Activated B cell treated with CpG ODN at 0.5 μM for 24 hours (primary cell): ENCODE measurements at regions of chr4 and their contacts with region 1.

Region 1: DNA sequence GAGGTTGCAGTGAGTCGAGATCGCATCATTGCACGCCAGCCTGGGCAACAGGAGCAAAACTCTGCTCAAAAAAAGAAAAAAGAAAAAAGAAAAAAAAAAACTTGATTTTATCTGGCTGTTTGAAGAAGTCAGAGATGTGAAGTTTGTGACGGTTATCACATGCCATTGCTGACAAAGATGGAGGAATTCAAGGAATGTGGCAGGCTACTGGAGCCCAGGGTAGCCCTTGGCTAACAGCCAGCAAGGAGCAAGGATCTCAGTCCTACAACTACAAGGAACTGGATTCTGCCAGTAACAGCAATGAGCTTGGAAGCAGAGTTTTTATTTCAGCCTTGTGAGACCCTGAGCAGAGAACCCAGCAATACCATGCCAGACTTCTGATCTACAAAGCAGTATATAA is 24.3 kb upstream of the TET2 start:
- DNase-seq: no peak
- ATAC-seq: no peak
- H3K4me3 Mint-ChIP-seq: no peak overlapping the region
- H3K27ac Mint-ChIP-seq: no peak overlapping the region
- H3K4me1 Mint-ChIP-seq: no peaks in the 10 kb centered on the region
- H3K27me3 Mint-ChIP-seq: no peaks in the 10 kb centered on the region
- CTCF ChIP-seq: no peak

Region 2: DNA sequence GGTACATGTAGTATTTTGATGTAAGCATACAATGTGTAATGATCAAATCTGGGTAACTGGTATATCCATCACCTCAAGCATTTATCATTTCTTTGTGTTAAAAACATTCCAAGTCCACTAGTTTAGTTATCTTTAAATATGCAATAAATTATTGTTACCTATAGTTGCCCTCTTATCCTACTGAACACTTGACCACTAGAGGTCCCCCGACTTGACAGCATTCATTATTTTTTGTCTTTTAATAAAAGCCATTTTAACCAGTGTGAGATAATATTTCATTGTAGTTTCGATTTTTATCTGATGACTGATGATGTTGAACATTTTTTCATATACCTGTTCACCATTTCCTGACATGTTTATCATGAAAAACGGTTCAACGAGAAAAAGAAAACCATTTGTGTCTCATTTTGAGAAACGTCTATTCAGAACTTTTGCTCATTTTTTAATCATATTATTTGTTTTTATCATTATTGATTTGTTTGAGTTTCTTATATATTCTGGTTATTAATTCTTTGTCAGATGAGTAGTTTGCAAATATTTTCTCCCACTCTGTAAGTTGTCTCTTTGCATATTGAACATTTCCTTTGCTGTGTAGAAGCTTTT is 428.6 kb before region 1 on chr4:
- CTCF ChIA-PET with region 1: no interaction called
- POLR2A ChIA-PET with region 1: no interaction called
- intact Hi-C with region 1: loop called (anchors 5 kb)
- DNase-seq: no peak
- ATAC-seq: no peak
- H3K4me3 Mint-ChIP-seq: no peak overlapping the region
- H3K27ac Mint-ChIP-seq: no peak overlapping the region
- H3K4me1 Mint-ChIP-seq: no peaks in the 10 kb centered on the region
- H3K27me3 Mint-ChIP-seq: no peaks in the 10 kb centered on the region
- CTCF ChIP-seq: no peak

Region 3: GRCh38 chr4:105050896-105051295 is 71.5 kb before region 1 on chr4:
- CTCF ChIA-PET with region 1: no interaction called
- POLR2A ChIA-PET with region 1: no interaction called
- intact Hi-C with region 1: no loop called
- DNase-seq: no peak
- ATAC-seq: no peak
- H3K4me3 Mint-ChIP-seq: no peak overlapping the region
- H3K27ac Mint-ChIP-seq: no peak overlapping the region
- H3K4me1 Mint-ChIP-seq: no peaks in the 10 kb centered on the region
- H3K27me3 Mint-ChIP-seq: peaks cover 3% of the 10 kb centered on the region
- CTCF ChIP-seq: no peak

Region 4: GRCh38 chr4:105146276-105147015 is 24.1 kb after region 1 on chr4 and contains the start of gene TET2:
- CTCF ChIA-PET with region 1: no interaction called
- POLR2A ChIA-PET with region 1: no interaction called
- intact Hi-C with region 1: no loop called
- DNase-seq: peak; percentile 72
- ATAC-seq: peak; percentile 80
- H3K4me3 Mint-ChIP-seq: peak within 1 kb of the TSS; percentile 99
- H3K27ac Mint-ChIP-seq: peak within 1 kb of the TSS; percentile 98
- H3K4me1 Mint-ChIP-seq: peaks cover 51% of the 10 kb centered on the region
- H3K27me3 Mint-ChIP-seq: no peaks in the 10 kb centered on the region
- CTCF ChIP-seq: no peak
- total RNA-seq, gene TET2: 39.7 and 51.2 TPM in 2 replicates